ENCODE measurements at regions of chr1 and their contacts with region 1.

Region 1: GRCh38 chr1:209747580-209748262 is 8.1 kb upstream of the TRAF3IP3 start:
- DNase-seq: peak; percentile 83
- ATAC-seq: peak; percentile 96
- H3K4me3 Mint-ChIP-seq: peak overlapping the region; percentile 82
- H3K27ac Mint-ChIP-seq: peak overlapping the region; percentile 87
- H3K4me1 Mint-ChIP-seq: peaks cover 43% of the 10 kb centered on the region
- H3K27me3 Mint-ChIP-seq: no peaks in the 10 kb centered on the region
- CTCF ChIP-seq: peak; percentile 91

Region 2: DNA sequence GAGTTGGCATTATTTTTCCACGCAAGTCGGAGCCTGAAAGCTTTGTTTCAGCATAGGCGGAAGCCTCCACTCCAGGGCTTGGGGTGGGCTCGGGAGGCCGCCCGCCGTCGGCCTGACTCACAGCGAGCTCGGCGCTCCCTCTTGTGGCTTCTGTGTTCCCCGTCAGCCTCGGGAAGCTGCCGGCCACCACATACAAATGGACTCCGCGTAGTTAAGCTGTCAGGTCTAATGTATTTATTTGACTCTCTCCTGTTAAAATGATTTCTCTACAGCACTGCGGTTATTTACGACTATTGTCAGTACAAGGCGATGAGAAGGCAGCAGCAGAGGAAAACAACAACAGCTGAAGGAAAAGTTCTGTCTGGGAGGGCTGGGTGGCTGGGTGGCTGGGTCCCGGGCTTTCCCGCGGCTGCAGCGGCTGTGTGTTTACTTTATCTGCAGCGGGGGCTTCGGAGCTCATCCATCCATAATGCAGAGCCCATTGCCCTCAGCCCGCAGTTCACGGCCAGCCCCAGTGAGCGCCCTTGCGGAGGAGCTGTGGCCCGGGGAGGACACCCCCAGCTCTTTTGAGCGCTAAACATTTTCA is 539.9 kb before region 1 on chr1:
- CTCF ChIA-PET with region 1: no interaction called
- POLR2A ChIA-PET with region 1: no interaction called
- intact Hi-C with region 1: loop called (anchors 5 kb)
- DNase-seq: no peak
- ATAC-seq: no peak
- H3K4me3 Mint-ChIP-seq: no peak overlapping the region
- H3K27ac Mint-ChIP-seq: no peak overlapping the region
- H3K4me1 Mint-ChIP-seq: peaks cover 2% of the 10 kb centered on the region
- H3K27me3 Mint-ChIP-seq: peaks cover 24% of the 10 kb centered on the region
- CTCF ChIP-seq: no peak

Region 3: DNA sequence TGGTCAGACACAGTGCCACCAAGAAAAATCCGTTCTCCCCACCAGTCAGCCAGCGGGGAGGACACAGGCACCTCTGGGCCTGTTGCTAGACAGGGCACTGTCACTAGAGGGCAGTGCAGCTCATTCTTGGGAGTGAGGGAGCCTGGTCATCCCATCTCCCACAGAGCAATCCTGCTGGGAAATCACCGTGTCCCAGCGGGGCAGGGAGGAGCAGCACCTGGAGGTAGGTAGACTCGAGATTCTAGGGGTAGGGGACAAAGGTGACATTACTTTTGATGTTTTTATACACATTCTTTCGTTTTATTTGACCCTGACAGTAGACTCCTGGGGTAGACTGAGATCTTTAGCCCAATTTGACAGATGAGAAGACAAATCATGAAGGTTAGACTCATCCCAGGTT is 170.9 kb before region 1 on chr1:
- CTCF ChIA-PET with region 1: no interaction called
- POLR2A ChIA-PET with region 1: no interaction called
- intact Hi-C with region 1: loop called (anchors 1 kb)
- DNase-seq: peak; percentile 49
- ATAC-seq: peak; percentile 79
- H3K4me3 Mint-ChIP-seq: no peak overlapping the region
- H3K27ac Mint-ChIP-seq: no peak overlapping the region
- H3K4me1 Mint-ChIP-seq: no peaks in the 10 kb centered on the region
- H3K27me3 Mint-ChIP-seq: peaks cover 16% of the 10 kb centered on the region
- CTCF ChIP-seq: peak; percentile 54

Region 4: GRCh38 chr1:209633335-209633997 is 114.3 kb before region 1 on chr1:
- CTCF ChIA-PET with region 1: no interaction called
- POLR2A ChIA-PET with region 1: no interaction called
- intact Hi-C with region 1: no loop called
- DNase-seq: no peak
- ATAC-seq: no peak
- H3K4me3 Mint-ChIP-seq: no peak overlapping the region
- H3K27ac Mint-ChIP-seq: no peak overlapping the region
- H3K4me1 Mint-ChIP-seq: no peaks in the 10 kb centered on the region
- H3K27me3 Mint-ChIP-seq: peaks cover 14% of the 10 kb centered on the region
- CTCF ChIP-seq: no peak

Region 5: DNA sequence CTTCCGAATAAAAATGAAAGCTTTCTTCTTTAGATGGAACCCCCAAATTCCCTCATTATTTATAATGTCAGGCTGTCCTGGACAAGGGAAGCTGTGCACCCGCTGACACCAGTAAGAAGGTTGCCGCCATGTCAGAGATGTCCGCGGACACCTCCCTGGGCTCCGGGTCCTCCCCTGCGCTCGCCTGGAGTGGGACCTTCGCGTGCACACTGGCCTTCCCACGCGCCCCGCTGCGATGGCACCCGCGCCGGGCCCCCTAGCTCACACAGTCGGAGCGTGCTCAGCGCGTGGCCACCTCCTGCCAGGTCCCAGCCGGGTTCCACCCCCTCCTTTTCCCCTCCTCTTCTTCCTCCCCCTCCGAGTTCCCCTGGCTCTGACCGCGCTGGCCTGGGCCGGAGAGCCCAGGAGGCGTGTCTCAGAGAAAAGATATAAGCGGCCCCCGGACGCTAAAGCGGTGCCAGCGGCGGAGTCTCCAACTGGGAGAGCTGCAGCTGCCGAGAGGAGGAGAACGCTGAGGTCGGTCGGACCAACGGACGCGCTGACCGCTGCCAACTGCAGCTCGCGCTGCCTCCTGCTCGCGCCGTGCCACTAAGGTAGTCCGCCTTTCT is 72.7 kb before region 1 on chr1 and contains the start of gene G0S2:
- CTCF ChIA-PET with region 1: interaction called, 3 read pairs
- POLR2A ChIA-PET with region 1: no interaction called
- intact Hi-C with region 1: loop called (anchors 5 kb)
- DNase-seq: peak; percentile 18
- ATAC-seq: peak; percentile 21
- H3K4me3 Mint-ChIP-seq: peak within 1 kb of the TSS; percentile 75
- H3K27ac Mint-ChIP-seq: peak within 1 kb of the TSS; percentile 72
- H3K4me1 Mint-ChIP-seq: peaks cover 37% of the 10 kb centered on the region
- H3K27me3 Mint-ChIP-seq: peaks cover 49% of the 10 kb centered on the region
- CTCF ChIP-seq: no peak
- total RNA-seq, gene G0S2: 2.1 and 2.3 TPM in 2 replicates

Region 6: DNA sequence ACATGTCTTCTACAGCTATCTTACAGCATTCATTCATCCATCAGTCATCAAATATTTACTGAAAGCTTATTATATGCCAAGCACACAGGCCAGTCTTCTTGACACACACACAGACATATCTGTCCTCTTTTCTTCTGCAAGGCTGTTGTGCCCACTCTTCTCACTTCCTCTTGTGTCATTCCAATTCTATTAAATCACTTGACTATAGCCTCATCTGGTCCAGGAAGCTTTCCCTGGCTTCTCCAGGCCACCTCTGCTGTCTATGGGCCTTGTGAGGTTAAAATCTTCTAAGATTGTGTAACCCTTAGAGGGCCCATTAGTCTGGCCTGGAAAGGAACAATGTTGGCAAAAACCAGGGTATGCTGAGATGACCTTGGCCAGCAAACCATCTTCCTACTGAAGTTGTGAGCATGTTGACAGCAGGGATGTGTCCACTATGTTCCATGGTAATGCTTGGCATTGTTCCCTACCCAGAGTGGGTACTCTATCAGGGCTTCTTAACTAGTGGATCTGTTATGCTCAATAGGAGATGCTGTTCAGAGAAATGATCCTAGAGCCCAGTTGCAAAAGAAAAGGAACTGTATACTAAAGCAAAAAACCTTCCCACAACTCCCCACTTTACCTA is 13.4 kb after region 1 on chr1:
- CTCF ChIA-PET with region 1: interaction called, 88 read pairs
- POLR2A ChIA-PET with region 1: interaction called, 13 read pairs
- intact Hi-C with region 1: loop called (anchors 1 kb)
- DNase-seq: no peak
- ATAC-seq: no peak
- H3K4me3 Mint-ChIP-seq: no peak overlapping the region
- H3K27ac Mint-ChIP-seq: peak overlapping the region; percentile 51
- H3K4me1 Mint-ChIP-seq: peaks cover 84% of the 10 kb centered on the region
- H3K27me3 Mint-ChIP-seq: no peaks in the 10 kb centered on the region
- CTCF ChIP-seq: no peak

Region 7: GRCh38 chr1:209774592-209774991 is 26.9 kb after region 1 on chr1:
- CTCF ChIA-PET with region 1: interaction called, 88 read pairs
- POLR2A ChIA-PET with region 1: interaction called, 21 read pairs
- intact Hi-C with region 1: no loop called
- DNase-seq: no peak
- ATAC-seq: peak; percentile 68
- H3K4me3 Mint-ChIP-seq: peak overlapping the region; percentile 60
- H3K27ac Mint-ChIP-seq: no peak overlapping the region
- H3K4me1 Mint-ChIP-seq: no peaks in the 10 kb centered on the region
- H3K27me3 Mint-ChIP-seq: no peaks in the 10 kb centered on the region
- CTCF ChIP-seq: no peak

Region 8: GRCh38 chr1:209827384-209828262 is 79.9 kb after region 1 on chr1 and contains the start of gene UTP25:
- CTCF ChIA-PET with region 1: interaction called, 18 read pairs
- POLR2A ChIA-PET with region 1: interaction called, 4 read pairs
- intact Hi-C with region 1: loop called (anchors 1 kb)
- DNase-seq: peak; percentile 85
- ATAC-seq: peak; percentile 91
- H3K4me3 Mint-ChIP-seq: peak within 1 kb of the TSS; percentile 97
- H3K27ac Mint-ChIP-seq: peak within 1 kb of the TSS; percentile 92
- H3K4me1 Mint-ChIP-seq: peaks cover 33% of the 10 kb centered on the region
- H3K27me3 Mint-ChIP-seq: peaks cover 7% of the 10 kb centered on the region
- CTCF ChIP-seq: no peak
- total RNA-seq, gene UTP25: 13.3 and 15.4 TPM in 2 replicates